RWPE1 (cell line): ENCODE measurements at regions of chr4 and their contacts with region 1.

Region 1: DNA sequence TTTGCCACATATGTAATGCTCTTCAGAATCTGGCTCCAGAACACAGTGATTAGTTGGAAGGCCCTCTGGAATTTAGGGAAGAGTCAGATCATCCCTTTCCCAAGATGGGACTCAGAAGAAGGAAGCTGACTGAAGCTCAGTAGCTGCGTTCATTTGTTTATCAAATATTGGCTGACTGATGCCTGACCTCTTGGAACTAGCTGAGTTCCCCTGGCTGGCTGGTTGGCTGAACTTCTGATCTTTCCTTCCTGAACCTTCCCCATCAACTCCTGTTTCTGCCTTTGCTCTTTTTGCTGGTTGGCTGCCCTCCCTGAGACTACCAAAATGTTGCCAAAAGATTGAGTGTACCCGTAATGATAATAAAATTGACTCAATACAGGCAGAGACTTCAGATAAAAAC is 866.5 kb upstream of the INTU start:
- DNase-seq: no peak
- H3K27ac ChIP-seq: no peak overlapping the region
- CTCF ChIP-seq: no peak

Region 2: GRCh38 chr4:126784966-126785580 is 18.8 kb after region 1 on chr4:
- CTCF ChIA-PET with region 1: interaction called, 11 read pairs
- POLR2A ChIA-PET with region 1: no interaction called
- DNase-seq: peak; percentile 8
- H3K27ac ChIP-seq: no peak overlapping the region
- CTCF ChIP-seq: no peak